CD4-positive, alpha-beta T cell (primary cell): ENCODE measurements at regions of chr2 and their contacts with region 1.

Region 1: GRCh38 chr2:213065583-213066442 is 85.6 kb downstream of the IKZF2 start:
- DNase-seq: peak in 4 of 14 experiments; percentile 5 to 17 (median 14)
- ATAC-seq: peak; percentile 64
- H3K4me3 ChIP-seq: peak overlapping the region; percentile 27
- H3K4me3 Mint-ChIP-seq: peak overlapping the region; percentile 77
- H3K27ac ChIP-seq: no peak overlapping the region
- H3K27ac Mint-ChIP-seq: peak overlapping the region; percentile 77
- H3K4me1 ChIP-seq: no peaks in the 10 kb centered on the region
- H3K4me1 Mint-ChIP-seq: peaks cover 40% of the 10 kb centered on the region
- H3K27me3 ChIP-seq: no peaks in the 10 kb centered on the region
- H3K27me3 Mint-ChIP-seq: no peaks in the 10 kb centered on the region
- CTCF ChIP-seq: no peak

Region 2: DNA sequence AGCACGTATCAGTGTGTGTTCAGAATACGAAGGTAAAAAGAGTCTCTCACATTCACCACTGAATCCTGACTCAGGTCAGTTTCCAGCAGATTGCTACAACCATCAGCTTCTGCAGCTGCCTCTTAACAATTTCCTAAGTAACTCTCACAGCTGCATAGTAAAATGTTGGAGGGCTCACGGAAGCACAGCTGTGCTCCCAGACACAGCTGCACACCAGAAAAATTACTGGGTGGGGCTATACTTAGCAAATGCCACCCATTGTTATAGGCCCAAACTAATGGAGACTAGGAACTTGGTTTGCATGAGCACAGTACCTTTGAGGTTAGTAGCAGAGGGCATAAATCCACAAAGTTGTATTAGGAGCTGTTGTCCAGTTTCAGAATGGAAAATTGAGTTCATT is 373.3 kb before region 1 on chr2:
- CTCF ChIA-PET with region 1: no interaction called
- POLR2A ChIA-PET with region 1: no interaction called
- intact Hi-C with region 1: no loop called
- DNase-seq: no peak
- ATAC-seq: no peak
- H3K4me3 ChIP-seq: no peak overlapping the region
- H3K4me3 Mint-ChIP-seq: no peak overlapping the region
- H3K27ac ChIP-seq: no peak overlapping the region
- H3K27ac Mint-ChIP-seq: no peak overlapping the region
- H3K4me1 ChIP-seq: no peaks in the 10 kb centered on the region
- H3K4me1 Mint-ChIP-seq: no peaks in the 10 kb centered on the region
- H3K27me3 ChIP-seq: no peaks in the 10 kb centered on the region
- H3K27me3 Mint-ChIP-seq: no peaks in the 10 kb centered on the region
- CTCF ChIP-seq: no peak

Region 3: DNA sequence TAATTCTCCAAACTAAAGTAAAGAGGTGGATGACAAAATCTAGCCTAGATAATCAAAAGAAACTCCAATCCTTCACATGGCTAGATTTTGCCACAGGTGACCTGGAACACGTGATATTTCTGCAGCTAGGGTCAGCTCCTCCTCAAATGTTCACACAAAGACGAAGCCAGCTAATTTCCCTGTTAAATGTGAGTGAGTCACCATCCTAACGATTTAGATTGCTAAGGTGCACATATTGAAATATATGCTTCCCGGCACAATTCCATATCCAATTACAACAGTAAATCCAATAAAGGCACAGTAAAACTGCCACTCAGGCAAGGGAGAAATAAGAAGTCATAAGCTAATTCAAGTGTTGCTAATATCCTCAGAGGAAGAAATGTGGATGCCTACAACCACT is 56.9 kb after region 1 on chr2:
- CTCF ChIA-PET with region 1: no interaction called
- POLR2A ChIA-PET with region 1: no interaction called
- intact Hi-C with region 1: loop called in 1 of 2 experiments (anchors 5 kb)
- DNase-seq: no peak
- ATAC-seq: no peak
- H3K4me3 ChIP-seq: no peak overlapping the region
- H3K4me3 Mint-ChIP-seq: no peak overlapping the region
- H3K27ac ChIP-seq: no peak overlapping the region
- H3K27ac Mint-ChIP-seq: peak overlapping the region; percentile 67
- H3K4me1 ChIP-seq: peaks cover 2% of the 10 kb centered on the region
- H3K4me1 Mint-ChIP-seq: peaks cover 47% of the 10 kb centered on the region
- H3K27me3 ChIP-seq: no peaks in the 10 kb centered on the region
- H3K27me3 Mint-ChIP-seq: no peaks in the 10 kb centered on the region
- CTCF ChIP-seq: no peak

Region 4: GRCh38 chr2:213137064-213137463 is 71.3 kb after region 1 on chr2:
- CTCF ChIA-PET with region 1: no interaction called
- POLR2A ChIA-PET with region 1: no interaction called
- intact Hi-C with region 1: no loop called
- DNase-seq: no peak
- ATAC-seq: no peak
- H3K4me3 ChIP-seq: no peak overlapping the region
- H3K4me3 Mint-ChIP-seq: no peak overlapping the region
- H3K27ac ChIP-seq: no peak overlapping the region
- H3K27ac Mint-ChIP-seq: no peak overlapping the region
- H3K4me1 ChIP-seq: no peaks in the 10 kb centered on the region
- H3K4me1 Mint-ChIP-seq: peaks cover 12% of the 10 kb centered on the region
- H3K27me3 ChIP-seq: no peaks in the 10 kb centered on the region
- H3K27me3 Mint-ChIP-seq: no peaks in the 10 kb centered on the region
- CTCF ChIP-seq: no peak

Region 5: DNA sequence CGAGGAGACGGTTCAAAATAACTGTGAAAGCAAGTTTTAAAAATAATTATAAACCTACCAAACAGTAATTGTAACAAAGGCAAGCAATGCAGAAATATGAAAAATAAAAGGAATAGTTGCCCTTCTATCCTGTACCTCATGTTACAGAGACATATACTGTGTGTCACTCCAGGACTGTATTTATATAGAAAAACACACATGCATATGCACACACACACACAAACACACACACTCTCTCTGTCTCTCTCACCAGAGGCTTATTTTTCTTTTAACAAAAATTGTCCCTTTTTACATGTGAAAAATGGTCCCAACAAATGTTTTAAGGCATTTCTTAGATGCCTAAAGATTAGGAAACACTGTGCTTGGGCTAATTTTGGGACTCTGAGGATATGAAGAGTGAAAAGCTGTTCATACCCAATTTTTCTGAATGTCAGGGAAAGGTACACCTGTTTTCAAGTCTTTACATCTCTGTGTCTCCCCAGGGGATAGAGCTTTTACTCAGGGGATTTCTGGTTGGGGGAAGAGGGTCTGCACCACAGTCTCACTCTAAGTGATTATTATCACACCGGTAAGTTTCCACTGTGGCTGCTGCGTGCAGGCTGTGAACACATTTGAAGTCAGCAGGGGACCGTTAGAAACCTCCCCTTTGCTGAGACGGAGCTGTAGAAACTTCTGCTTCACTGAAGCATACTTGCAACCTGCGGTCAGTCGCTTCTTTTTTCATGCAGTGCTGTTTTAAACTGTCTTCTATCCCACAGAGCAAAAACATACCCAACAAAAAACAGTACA is 167.0 kb after region 1 on chr2:
- CTCF ChIA-PET with region 1: no interaction called
- POLR2A ChIA-PET with region 1: no interaction called
- intact Hi-C with region 1: no loop called
- DNase-seq: peak in 13 of 14 experiments; percentile 2 to 70 (median 25)
- ATAC-seq: peak; percentile 87
- H3K4me3 ChIP-seq: no peak overlapping the region
- H3K4me3 Mint-ChIP-seq: peak overlapping the region; percentile 49
- H3K27ac ChIP-seq: peak overlapping the region in 1 of 2 donors; percentile 16
- H3K27ac Mint-ChIP-seq: peak overlapping the region; percentile 68
- H3K4me1 ChIP-seq: peaks cover 3% of the 10 kb centered on the region
- H3K4me1 Mint-ChIP-seq: peaks cover 28% of the 10 kb centered on the region
- H3K27me3 ChIP-seq: no peaks in the 10 kb centered on the region
- H3K27me3 Mint-ChIP-seq: no peaks in the 10 kb centered on the region
- CTCF ChIP-seq: no peak

Region 6: DNA sequence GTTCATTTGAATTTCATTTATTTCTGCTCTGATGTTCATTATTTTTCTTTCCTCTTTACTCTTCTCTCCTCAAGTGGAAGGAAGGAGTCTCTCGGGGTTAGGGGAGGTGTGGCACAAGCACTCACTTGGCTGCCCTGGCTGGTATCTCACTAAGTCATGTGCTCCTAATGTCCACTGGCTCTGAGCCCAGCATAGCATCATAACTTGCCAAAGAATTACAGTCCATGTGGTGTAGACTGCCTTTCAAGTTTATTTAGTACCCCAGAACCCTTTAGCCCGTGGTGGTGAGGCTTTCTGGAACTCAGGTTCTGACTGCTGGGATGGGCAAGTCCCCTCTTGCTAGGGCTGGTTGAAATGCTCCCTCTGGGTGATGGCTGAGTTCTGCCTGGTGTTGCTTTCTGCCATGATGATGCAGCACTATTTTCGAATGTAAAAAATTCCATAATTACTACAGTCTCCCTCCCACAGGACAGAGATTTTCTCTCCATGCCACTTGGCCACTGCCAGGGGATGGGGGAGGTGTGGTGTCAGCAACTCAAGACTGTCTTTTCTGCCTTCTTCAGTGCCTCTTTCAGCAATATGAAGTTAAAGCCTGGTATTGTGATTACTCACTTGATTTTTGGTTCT is 240.6 kb after region 1 on chr2:
- CTCF ChIA-PET with region 1: no interaction called
- POLR2A ChIA-PET with region 1: no interaction called
- intact Hi-C with region 1: no loop called
- DNase-seq: no peak
- ATAC-seq: no peak
- H3K4me3 ChIP-seq: no peak overlapping the region
- H3K4me3 Mint-ChIP-seq: no peak overlapping the region
- H3K27ac ChIP-seq: no peak overlapping the region
- H3K27ac Mint-ChIP-seq: no peak overlapping the region
- H3K4me1 ChIP-seq: no peaks in the 10 kb centered on the region
- H3K4me1 Mint-ChIP-seq: no peaks in the 10 kb centered on the region
- H3K27me3 ChIP-seq: no peaks in the 10 kb centered on the region
- H3K27me3 Mint-ChIP-seq: no peaks in the 10 kb centered on the region
- CTCF ChIP-seq: no peak